ENCODE measurements at regions of chr3 and their contacts with region 1.

Region 1: DNA sequence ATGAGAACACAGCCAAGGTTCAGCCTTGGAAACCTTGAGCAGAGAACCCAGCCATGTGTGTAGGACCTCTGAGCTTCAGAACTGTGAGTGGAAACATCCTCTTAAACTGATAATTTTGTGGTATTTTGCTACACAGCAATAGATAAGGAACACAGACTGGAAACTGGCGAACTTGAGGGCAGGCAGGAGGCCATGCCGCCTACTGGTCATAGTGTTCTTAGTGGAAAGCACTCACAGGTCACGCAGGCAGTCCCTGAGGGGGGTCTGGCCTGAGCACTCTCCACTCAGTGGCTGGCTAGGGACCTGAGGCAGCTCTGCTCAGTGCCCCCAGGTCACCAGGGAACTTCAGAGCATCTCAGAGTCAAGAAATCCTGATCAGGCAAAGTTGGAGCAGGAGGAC is 9.7 kb upstream of the XIRP1 start:
- DNase-seq: no peak
- ATAC-seq: peak in 3 of 4 donors; percentile 38 to 44 (median 38)
- H3K4me3 ChIP-seq: no peak overlapping the region
- H3K27ac ChIP-seq: no peak overlapping the region
- H3K4me1 ChIP-seq: no peaks in the 10 kb centered on the region
- H3K27me3 ChIP-seq: no peaks in the 10 kb centered on the region
- CTCF ChIP-seq: no peak
- POLR2A ChIP-seq: no peak

Region 2: GRCh38 chr3:38805004-38805403 is 397.1 kb before region 1 on chr3:
- intact Hi-C with region 1: no loop called
- DNase-seq: no peak
- ATAC-seq: no peak
- H3K4me3 ChIP-seq: no peak overlapping the region
- H3K27ac ChIP-seq: no peak overlapping the region
- H3K4me1 ChIP-seq: no peaks in the 10 kb centered on the region
- H3K27me3 ChIP-seq: peaks cover 0 to 2% of the 10 kb centered on the region in 2 donors
- CTCF ChIP-seq: no peak
- POLR2A ChIP-seq: no peak

Region 3: GRCh38 chr3:39254806-39255449 is 52.8 kb after region 1 on chr3:
- intact Hi-C with region 1: no loop called
- DNase-seq: no peak
- ATAC-seq: no peak
- H3K4me3 ChIP-seq: no peak overlapping the region
- H3K27ac ChIP-seq: no peak overlapping the region
- H3K4me1 ChIP-seq: no peaks in the 10 kb centered on the region
- H3K27me3 ChIP-seq: no peaks in the 10 kb centered on the region
- CTCF ChIP-seq: no peak
- POLR2A ChIP-seq: no peak

Region 4: GRCh38 chr3:39279745-39280517 is 77.8 kb after region 1 on chr3 and contains the start of gene CX3CR1:
- intact Hi-C with region 1: loop called in 1 of 2 experiments (anchors 5 kb)
- DNase-seq: peak in 1 of 3 donors; percentile 33
- ATAC-seq: peak in 2 of 4 donors; percentile 17 to 18
- H3K4me3 ChIP-seq: no peak within 1 kb of the TSS
- H3K27ac ChIP-seq: no peak within 1 kb of the TSS
- H3K4me1 ChIP-seq: peaks cover 0 to 2% (median 0%) of the 10 kb centered on the region in 4 donors
- H3K27me3 ChIP-seq: no peaks in the 10 kb centered on the region
- CTCF ChIP-seq: no peak
- POLR2A ChIP-seq: no peak
- total RNA-seq, gene CX3CR1: 0.25 to 1.8 (median 0.72) TPM in 5 of 6 experiments, not detected in the other

Measured in right lobe of liver (tissue), 6 donors.